ENCODE measurements at regions of chr3 and their contacts with region 1.

Region 1: DNA sequence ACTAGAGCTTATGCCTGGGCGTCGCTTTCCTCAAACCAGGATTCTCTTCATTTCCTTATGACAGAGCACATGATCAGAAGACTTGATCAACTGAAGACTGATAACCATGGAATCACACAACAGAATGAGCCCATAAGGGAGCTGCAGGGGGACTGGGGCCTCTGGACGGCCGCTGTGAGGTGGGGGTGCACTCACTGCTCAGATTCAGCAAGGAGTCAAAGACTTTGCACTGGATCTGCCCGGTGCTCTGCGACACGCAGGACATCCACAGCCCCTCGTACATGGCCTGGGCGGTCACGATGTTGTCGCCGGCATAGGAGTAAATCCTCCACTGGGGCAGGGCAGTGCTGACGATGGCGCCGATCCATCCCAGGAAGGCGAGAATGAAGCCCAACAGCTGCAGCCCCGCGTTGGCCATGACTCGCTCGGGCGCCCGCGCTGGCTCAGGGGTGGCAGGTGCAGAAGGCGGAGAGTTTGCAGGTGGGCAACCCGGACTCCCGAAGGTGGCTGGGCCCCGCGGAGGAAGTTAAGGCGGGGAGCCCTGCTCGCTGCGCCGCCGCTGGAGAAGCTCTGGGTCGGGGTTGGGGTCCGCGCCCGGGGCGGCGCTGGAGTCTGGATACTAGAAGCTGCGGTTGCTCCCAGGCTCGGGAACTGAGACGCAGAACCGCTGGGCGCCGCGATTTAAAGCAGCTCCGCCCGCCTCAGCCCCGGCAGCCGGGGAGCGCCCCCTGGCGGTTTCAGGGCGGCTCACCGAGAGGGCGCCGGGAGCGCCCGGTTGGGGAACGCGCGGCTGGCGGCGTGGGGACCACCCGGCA is at the start of gene CLDN1:
- DNase-seq: peak; percentile 56 to 93 (median 84)

Region 2: GRCh38 chr3:189954733-189955132 is 367.3 kb before region 1 on chr3:
- intact Hi-C with region 1: loop called (anchors 5 kb)
- DNase-seq: no peak

Region 3: DNA sequence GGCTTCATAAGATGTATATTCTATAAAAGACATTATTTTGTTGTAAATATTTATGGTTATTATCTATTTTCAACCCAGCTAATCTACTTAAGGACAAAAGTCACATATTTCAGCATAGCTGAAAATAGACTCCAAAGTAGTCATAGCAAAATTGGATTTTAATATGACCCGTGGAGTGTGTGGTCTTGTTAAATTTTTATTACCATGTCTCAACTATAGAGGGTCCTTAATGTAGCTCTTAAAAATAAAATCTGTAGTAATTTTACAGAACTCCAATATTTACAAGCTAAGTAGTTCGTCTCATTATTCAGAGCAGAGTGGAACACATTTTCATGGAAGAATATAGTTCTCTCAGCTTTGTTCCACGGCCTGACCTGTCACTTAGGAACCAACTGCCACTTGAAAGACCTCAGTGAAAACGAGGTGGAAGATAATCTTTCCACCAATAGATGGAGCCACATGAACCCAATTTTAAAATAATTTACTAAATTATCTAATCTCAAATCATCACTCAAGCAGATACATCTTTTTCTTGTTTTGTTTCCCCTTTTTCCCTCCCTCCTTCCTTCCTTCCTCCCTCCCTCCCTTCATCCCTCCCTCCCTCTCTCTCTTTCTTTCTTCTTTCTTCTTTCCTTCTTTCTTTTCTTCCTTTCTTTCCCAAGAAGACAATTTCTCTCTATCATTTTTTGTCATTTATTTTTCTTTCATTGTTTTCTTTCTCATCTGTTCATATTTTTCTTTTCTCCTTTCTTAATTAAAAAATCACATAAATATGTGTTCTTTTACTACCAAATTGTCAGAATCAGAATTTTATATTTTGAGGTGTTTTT is 96.9 kb before region 1 on chr3:
- intact Hi-C with region 1: loop called (anchors 5 kb)
- DNase-seq: peak in 3 of 42 donors; percentile 3 to 29 (median 18)

Region 4: GRCh38 chr3:190359813-190360212 is 37.8 kb after region 1 on chr3:
- intact Hi-C with region 1: no loop called
- DNase-seq: no peak